Vagina (tissue), 2 donors: ENCODE measurements at regions of chr1 and their contacts with region 1.

Region 1: GRCh38 chr1:155208541-155209311 is at the start of gene MTX1:
- DNase-seq: peak in 1 of 2 donors; percentile 95
- H3K4me3 ChIP-seq: peak within 1 kb of the TSS; percentile 78 to 87
- H3K27ac ChIP-seq: peak within 1 kb of the TSS; percentile 99
- H3K4me1 ChIP-seq: peaks cover 38% of the 10 kb centered on the region
- H3K27me3 ChIP-seq: no peaks in the 10 kb centered on the region
- CTCF ChIP-seq: no peak
- POLR2A ChIP-seq: peak in 1 of 2 donors; percentile 9
- total RNA-seq, gene MTX1: 29.5 TPM

Region 2: DNA sequence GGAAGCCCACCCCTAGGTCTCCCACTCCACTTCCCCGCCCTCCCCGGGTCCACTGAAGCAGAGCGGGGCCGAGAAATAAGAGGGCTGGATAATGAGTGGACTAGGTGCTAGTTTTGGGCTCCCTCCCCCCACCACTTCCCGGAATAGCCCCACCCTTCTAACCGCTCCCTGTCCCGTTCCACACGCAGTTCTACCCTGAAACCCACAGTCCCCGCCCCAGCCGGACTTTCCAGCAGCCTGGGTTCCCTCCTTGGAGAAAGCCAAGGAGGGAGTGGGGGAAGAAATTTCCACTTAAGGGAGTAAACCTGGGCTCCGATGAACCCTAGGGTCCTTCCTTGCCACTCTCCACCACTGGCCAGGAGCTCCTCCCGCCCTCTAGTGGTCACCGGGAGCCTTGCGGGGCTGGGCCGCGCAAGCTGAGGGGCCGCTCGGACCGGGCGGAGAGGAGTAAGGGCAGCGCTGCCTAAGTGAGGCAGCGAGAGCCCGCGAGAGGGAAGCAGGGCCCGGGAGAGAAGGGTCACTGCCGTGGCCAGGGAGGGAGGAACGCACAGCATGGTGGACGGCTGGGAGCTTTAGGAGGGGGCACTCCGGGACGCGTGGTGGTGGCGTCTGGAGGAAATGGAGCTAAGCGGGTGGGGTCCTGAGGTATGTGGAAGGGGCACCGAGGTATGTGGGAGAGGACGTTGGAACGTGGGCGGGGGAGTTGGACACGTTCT is 15.3 kb before region 1 on chr1:
- intact Hi-C with region 1: no loop called
- DNase-seq: no peak
- H3K4me3 ChIP-seq: peak overlapping the region; percentile 52 to 58
- H3K27ac ChIP-seq: peak overlapping the region; percentile 85
- H3K4me1 ChIP-seq: peaks cover 39% of the 10 kb centered on the region
- H3K27me3 ChIP-seq: no peaks in the 10 kb centered on the region
- CTCF ChIP-seq: peak; percentile 79 to 96 (median 90)
- POLR2A ChIP-seq: no peak

Region 3: GRCh38 chr1:155244368-155245162 is 35.8 kb after region 1 on chr1:
- intact Hi-C with region 1: loop called (anchors 5 kb)
- DNase-seq: peak in 1 of 2 donors; percentile 99
- H3K4me3 ChIP-seq: peak overlapping the region; percentile 55 to 60
- H3K27ac ChIP-seq: peak overlapping the region; percentile 88
- H3K4me1 ChIP-seq: peaks cover 38% of the 10 kb centered on the region
- H3K27me3 ChIP-seq: no peaks in the 10 kb centered on the region
- CTCF ChIP-seq: peak in 2 of 3 experiments; percentile 58 to 100
- POLR2A ChIP-seq: peak; percentile 11 to 73

Region 4: DNA sequence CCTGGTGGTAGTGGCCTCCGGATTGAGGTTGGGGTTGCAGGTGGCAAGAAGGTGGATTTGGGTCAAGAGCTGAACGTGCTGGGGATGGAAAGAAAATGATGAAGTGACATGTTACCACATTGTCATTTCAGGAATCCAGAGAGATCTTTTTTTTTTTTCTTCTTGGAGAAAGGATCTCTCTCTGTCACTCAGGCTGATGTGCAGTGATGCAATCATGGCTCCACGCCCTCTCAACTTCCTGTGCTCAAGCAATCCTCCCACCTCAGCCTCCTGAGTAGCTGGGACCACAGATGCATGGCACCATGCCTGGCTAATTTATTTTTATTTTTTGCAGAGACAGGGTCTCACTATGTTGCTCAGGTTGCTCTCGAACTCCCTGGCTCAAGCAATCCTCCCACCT is 567.7 kb after region 1 on chr1:
- intact Hi-C with region 1: no loop called
- DNase-seq: no peak
- H3K4me3 ChIP-seq: no peak overlapping the region
- H3K27ac ChIP-seq: no peak overlapping the region
- H3K4me1 ChIP-seq: no peaks in the 10 kb centered on the region
- H3K27me3 ChIP-seq: no peaks in the 10 kb centered on the region
- CTCF ChIP-seq: no peak
- POLR2A ChIP-seq: no peak